ENCODE measurements at regions of chr11 and their contacts with region 1.

Region 1: GRCh38 chr11:62081378-62082291 is 42.2 kb upstream of the INCENP start:
- DNase-seq: peak; percentile 83
- ATAC-seq: peak; percentile 85
- H3K4me3 Mint-ChIP-seq: peak overlapping the region; percentile 20
- H3K27ac Mint-ChIP-seq: no peak overlapping the region
- H3K4me1 Mint-ChIP-seq: peaks cover 8% of the 10 kb centered on the region
- H3K27me3 Mint-ChIP-seq: peaks cover 6% of the 10 kb centered on the region

Region 2: GRCh38 chr11:61871158-61871597 is 210.5 kb before region 1 on chr11:
- CTCF ChIA-PET with region 1: interaction called, 33 read pairs
- DNase-seq: peak; percentile 73
- ATAC-seq: peak; percentile 95
- H3K4me3 Mint-ChIP-seq: peak overlapping the region; percentile 61
- H3K27ac Mint-ChIP-seq: no peak overlapping the region
- H3K4me1 Mint-ChIP-seq: peaks cover 5% of the 10 kb centered on the region
- H3K27me3 Mint-ChIP-seq: peaks cover 4% of the 10 kb centered on the region

Region 3: DNA sequence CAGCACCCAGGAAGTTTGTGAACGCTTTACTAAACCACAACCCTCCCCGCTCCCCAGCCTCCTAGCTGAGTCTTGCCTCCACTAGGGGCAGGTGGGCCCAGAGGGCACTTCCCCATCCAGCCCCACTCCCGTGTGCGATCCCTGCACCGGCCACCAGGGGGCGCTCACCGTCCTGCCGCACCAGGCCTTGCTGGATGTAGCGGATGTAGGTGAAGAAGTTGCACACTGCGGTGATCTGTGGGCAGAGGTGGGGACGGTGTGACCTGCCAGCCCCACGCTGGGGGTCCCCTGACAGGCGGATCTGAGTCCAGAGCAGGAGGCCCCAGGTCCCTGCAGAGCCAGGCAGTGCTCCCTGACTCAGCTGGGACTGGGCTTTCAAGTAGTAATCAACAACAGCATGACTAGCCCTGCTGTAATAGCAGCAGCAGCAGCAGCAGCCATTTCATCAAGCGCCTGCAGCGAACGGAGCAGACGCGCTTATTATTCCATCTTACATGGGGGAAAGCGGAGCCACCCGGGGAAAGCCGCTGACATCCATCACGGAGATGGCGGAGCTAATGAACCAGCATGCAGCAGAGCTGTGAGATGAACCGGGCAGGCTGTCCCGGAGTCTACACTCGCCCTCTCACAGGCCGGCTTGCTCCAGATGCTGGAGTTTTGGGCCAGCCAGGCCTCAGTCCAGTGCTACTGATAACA is 182.3 kb before region 1 on chr11:
- CTCF ChIA-PET with region 1: interaction called, 260 read pairs
- DNase-seq: peak; percentile 92
- ATAC-seq: peak; percentile 94
- H3K4me3 Mint-ChIP-seq: no peak overlapping the region
- H3K27ac Mint-ChIP-seq: peak overlapping the region; percentile 55
- H3K4me1 Mint-ChIP-seq: peaks cover 6% of the 10 kb centered on the region
- H3K27me3 Mint-ChIP-seq: peaks cover 3% of the 10 kb centered on the region

Region 4: DNA sequence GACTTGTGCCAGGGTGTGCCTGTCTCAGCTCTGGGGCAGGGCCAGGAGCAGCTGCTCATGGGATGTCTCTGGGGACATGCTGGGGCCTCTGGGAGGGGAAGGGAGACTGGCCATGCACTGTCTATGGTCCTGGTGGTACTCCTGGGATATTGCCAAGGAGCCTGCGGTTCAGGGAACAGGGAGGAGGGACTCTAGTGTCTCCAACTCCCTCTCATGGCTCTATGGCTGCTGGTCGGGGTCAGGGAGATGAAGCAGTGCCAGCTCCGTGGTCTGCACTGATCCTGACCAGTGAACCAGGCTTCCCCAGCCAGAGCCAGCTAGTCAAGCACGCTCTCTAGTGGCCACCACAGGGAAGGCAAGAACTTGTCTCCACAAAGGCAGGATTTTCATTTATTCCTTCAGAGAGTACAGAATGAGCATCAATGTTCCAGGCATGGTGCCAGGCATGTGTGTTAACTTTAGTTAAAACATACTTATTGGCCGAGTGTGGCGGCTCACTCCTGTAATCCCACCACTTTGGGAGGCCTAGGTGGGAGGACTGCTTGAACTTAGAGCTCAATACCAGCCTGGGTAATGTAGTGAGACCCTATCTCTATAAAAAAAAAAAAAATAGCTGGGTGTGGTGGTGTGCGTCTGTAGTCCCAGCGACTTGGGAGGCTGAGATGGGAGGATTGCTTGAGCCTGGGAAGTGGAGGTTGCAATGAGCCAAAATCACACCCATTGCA is 134.0 kb before region 1 on chr11:
- CTCF ChIA-PET with region 1: interaction called, 86 read pairs
- DNase-seq: peak; percentile 77
- ATAC-seq: peak; percentile 84
- H3K4me3 Mint-ChIP-seq: no peak overlapping the region
- H3K27ac Mint-ChIP-seq: no peak overlapping the region
- H3K4me1 Mint-ChIP-seq: no peaks in the 10 kb centered on the region
- H3K27me3 Mint-ChIP-seq: peaks cover 4% of the 10 kb centered on the region

Region 5: DNA sequence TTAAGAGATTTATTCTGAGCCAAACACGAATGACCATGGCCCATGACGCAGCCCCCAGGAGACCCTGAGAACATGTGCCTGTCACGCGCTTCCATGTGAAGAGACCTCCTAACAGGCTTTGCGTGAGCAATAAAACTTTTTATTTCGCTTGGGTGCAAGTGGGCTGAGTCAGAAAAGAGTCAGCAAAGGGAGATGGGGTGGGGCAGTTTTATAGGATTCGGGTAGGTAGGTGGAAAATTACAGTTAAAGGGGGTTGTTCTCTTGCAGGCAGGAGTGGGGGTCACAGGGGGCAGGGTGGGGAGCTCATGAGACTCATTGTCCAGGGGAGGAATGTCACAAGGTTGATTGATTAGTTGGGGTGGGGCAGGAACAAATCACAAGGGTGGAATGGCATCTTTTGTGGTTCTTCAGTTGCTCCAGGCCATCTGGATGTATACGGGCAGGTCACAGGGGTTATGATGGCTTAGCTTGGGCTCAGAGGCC is 37.0 kb before region 1 on chr11:
- CTCF ChIA-PET with region 1: interaction called, 11 read pairs
- DNase-seq: no peak
- ATAC-seq: no peak
- H3K4me3 Mint-ChIP-seq: no peak overlapping the region
- H3K27ac Mint-ChIP-seq: no peak overlapping the region
- H3K4me1 Mint-ChIP-seq: no peaks in the 10 kb centered on the region
- H3K27me3 Mint-ChIP-seq: peaks cover 14% of the 10 kb centered on the region

Region 6: DNA sequence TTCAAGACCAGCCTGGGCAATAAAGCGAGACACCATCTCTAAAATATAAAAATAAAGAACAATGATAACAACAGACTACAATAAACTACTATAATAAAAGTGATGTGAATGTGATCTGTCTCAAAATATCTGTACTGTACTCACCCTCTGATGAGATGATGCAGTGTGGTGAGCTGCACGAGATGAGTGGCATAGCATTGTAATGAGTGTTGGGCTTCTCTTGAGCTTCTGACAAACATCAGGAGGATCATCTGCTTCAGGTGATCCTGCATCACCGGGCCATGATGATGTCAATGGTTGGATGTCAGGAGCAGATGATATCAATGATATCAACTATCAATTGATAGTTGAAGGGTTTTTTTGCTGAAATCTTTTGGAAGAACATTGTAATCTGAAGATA is 10.2 kb before region 1 on chr11:
- CTCF ChIA-PET with region 1: interaction called, 19 read pairs
- DNase-seq: no peak
- ATAC-seq: no peak
- H3K4me3 Mint-ChIP-seq: no peak overlapping the region
- H3K27ac Mint-ChIP-seq: no peak overlapping the region
- H3K4me1 Mint-ChIP-seq: peaks cover 8% of the 10 kb centered on the region
- H3K27me3 Mint-ChIP-seq: peaks cover 6% of the 10 kb centered on the region